Prostate gland (tissue), 2 donors: ENCODE measurements at regions of chr11 and their contacts with region 1.

Region 1: GRCh38 chr11:9613118-9613829 is 39.8 kb downstream of the WEE1 start:
- DNase-seq: peak; percentile 93
- H3K4me3 ChIP-seq: peak overlapping the region; percentile 33 to 39
- H3K27ac ChIP-seq: peak overlapping the region; percentile 92 to 93
- H3K4me1 ChIP-seq: no peaks in the 10 kb centered on the region
- H3K27me3 ChIP-seq: no peaks in the 10 kb centered on the region
- CTCF ChIP-seq: peak; percentile 93 to 99 (median 97)
- POLR2A ChIP-seq: peak; percentile 50

Region 2: GRCh38 chr11:9460322-9461067 is 152.8 kb before region 1 on chr11 and contains the start of gene ZNF143:
- intact Hi-C with region 1: loop called (anchors 2 kb)
- DNase-seq: peak; percentile 100
- H3K4me3 ChIP-seq: peak within 1 kb of the TSS; percentile 82 to 95
- H3K27ac ChIP-seq: peak within 1 kb of the TSS; percentile 99 to 100
- H3K4me1 ChIP-seq: no peaks in the 10 kb centered on the region
- H3K27me3 ChIP-seq: no peaks in the 10 kb centered on the region
- CTCF ChIP-seq: peak in 2 of 4 experiments; percentile 17 to 39
- POLR2A ChIP-seq: peak; percentile 95
- total RNA-seq, gene ZNF143: 15.5 to 41.1 TPM

Region 3: DNA sequence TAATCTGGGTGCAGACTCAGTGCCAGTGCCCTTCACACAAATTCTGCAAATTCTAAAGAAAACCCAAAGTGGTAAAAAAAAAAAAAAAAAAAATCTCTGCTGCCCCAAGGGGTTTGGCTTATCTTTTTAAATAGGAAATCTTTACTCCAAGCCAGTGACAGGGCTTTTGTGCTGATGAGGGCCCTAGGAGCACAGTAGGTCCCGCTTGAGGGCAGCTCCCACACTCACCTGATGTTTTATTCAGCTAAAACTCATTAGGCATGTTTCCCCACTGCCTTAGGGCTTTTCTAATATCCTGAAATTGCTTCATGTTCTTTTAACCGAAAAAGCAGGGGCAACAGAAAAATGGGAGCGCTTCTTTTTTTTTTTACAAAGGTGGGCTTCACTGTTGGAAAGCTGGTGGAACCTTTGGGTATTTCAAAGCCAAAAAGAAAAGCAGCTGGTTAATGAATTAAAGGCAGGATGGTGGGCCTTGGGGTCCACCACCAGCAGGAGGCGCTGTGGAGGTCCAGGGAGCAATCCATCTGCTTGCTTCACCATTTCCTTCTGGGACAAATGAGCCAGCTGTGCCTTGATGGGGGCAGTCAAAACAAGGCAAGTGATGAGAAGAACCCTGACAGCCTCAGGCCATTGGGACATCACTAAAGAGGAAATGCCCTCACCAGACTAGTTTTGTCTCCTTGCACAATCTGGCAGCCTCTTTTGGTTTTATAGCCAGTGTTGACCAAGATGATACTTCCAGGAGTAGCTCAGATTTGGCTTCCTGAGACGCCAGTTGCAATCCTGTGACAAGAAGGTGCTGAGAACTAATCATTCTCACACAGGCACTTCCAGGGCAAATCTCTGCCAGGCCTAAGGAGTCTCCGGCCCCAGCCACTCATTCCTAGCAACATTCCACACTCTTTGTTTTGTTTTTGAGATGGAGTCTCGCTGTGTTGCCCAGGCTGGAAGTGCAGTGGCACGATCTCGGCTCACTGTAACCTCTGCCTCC is 78.2 kb before region 1 on chr11:
- intact Hi-C with region 1: loop called (anchors 5 kb)
- DNase-seq: peak; percentile 74
- H3K4me3 ChIP-seq: no peak overlapping the region
- H3K27ac ChIP-seq: peak overlapping the region; percentile 44 to 68
- H3K4me1 ChIP-seq: peaks cover 8% of the 10 kb centered on the region
- H3K27me3 ChIP-seq: no peaks in the 10 kb centered on the region
- CTCF ChIP-seq: peak in 3 of 4 experiments; percentile 34 to 55 (median 55)
- POLR2A ChIP-seq: no peak

Region 4: GRCh38 chr11:9573052-9573774 is 40.1 kb before region 1 on chr11 and contains the start of gene WEE1:
- intact Hi-C with region 1: loop called (anchors 2 kb)
- DNase-seq: peak; percentile 98
- H3K4me3 ChIP-seq: peak within 1 kb of the TSS; percentile 77
- H3K27ac ChIP-seq: peak within 1 kb of the TSS; percentile 93 to 99
- H3K4me1 ChIP-seq: peaks cover 8% of the 10 kb centered on the region
- H3K27me3 ChIP-seq: no peaks in the 10 kb centered on the region
- CTCF ChIP-seq: no peak
- POLR2A ChIP-seq: peak; percentile 92
- total RNA-seq, gene WEE1: 31.0 to 33.1 TPM

Region 5: DNA sequence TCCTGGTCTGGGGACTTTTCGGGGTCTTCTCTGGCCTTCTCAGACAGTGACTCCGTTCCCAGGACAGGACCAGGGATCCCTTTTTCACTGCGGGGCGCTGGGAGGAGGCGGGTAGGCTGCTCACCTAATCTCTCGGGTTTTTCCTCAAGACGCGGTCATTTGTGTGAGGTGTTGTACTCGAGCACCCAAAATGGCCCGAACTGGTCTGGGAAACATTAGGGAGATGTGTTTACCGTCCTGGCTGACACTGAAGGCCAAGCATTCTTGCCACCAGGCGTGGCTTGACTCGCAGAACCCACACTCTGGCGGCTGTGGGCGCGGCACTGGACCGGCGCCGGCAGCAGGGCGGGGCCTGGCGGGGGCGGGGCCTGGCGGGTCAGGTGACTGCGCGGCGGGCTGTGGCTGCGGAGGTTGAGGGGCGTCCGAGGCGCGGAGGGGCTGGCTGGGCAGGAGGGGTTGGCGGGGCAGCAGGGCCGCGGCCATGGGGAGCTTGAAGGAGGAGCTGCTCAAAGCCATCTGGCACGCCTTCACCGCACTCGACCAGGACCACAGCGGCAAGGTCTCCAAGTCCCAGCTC is 50.5 kb after region 1 on chr11 and contains the start of gene SWAP70:
- intact Hi-C with region 1: loop called (anchors 5 kb)
- DNase-seq: peak; percentile 88
- H3K4me3 ChIP-seq: peak within 1 kb of the TSS; percentile 90 to 96
- H3K27ac ChIP-seq: peak within 1 kb of the TSS; percentile 84 to 95
- H3K4me1 ChIP-seq: no peaks in the 10 kb centered on the region
- H3K27me3 ChIP-seq: no peaks in the 10 kb centered on the region
- CTCF ChIP-seq: peak; percentile 23 to 77 (median 50)
- POLR2A ChIP-seq: peak; percentile 59
- total RNA-seq, gene SWAP70: 20.8 to 25.2 TPM

Region 6: GRCh38 chr11:9688716-9689511 is 75.6 kb after region 1 on chr11:
- intact Hi-C with region 1: no loop called
- DNase-seq: peak; percentile 24
- H3K4me3 ChIP-seq: no peak overlapping the region
- H3K27ac ChIP-seq: peak overlapping the region; percentile 27 to 56
- H3K4me1 ChIP-seq: no peaks in the 10 kb centered on the region
- H3K27me3 ChIP-seq: no peaks in the 10 kb centered on the region
- CTCF ChIP-seq: no peak
- POLR2A ChIP-seq: no peak

Region 7: GRCh38 chr11:9748361-9748970 is 135.2 kb after region 1 on chr11:
- intact Hi-C with region 1: loop called (anchors 1 kb)
- DNase-seq: peak; percentile 44
- H3K4me3 ChIP-seq: no peak overlapping the region
- H3K27ac ChIP-seq: no peak overlapping the region
- H3K4me1 ChIP-seq: no peaks in the 10 kb centered on the region
- H3K27me3 ChIP-seq: no peaks in the 10 kb centered on the region
- CTCF ChIP-seq: peak; percentile 33 to 79 (median 68)
- POLR2A ChIP-seq: no peak

Region 8: GRCh38 chr11:10051868-10052586 is 438.8 kb after region 1 on chr11:
- intact Hi-C with region 1: no loop called
- DNase-seq: no peak
- H3K4me3 ChIP-seq: no peak overlapping the region
- H3K27ac ChIP-seq: no peak overlapping the region
- H3K4me1 ChIP-seq: no peaks in the 10 kb centered on the region
- H3K27me3 ChIP-seq: no peaks in the 10 kb centered on the region
- CTCF ChIP-seq: no peak
- POLR2A ChIP-seq: no peak